Heart right ventricle (tissue), 16 donors: ENCODE measurements at regions of chr3 and their contacts with region 1.

Region 1: GRCh38 chr3:171459942-171460724 is at the start of gene TNIK:
- DNase-seq: peak; percentile 92 to 93
- ATAC-seq: peak; percentile 95 to 98 (median 96)
- H3K4me3 ChIP-seq: peak within 1 kb of the TSS; percentile 40 to 89 (median 72)
- H3K27ac ChIP-seq: peak within 1 kb of the TSS; percentile 54 to 87 (median 82)
- H3K4me1 ChIP-seq: peaks cover 0 to 52% (median 25%) of the 10 kb centered on the region in 9 donors
- H3K27me3 ChIP-seq: peaks cover 0 to 30% (median 9%) of the 10 kb centered on the region in 7 donors
- CTCF ChIP-seq: peak in 1 of 9 donors; percentile 36
- total RNA-seq, gene TNIK: 20.5 to 51.9 (median 38.8) TPM

Region 2: DNA sequence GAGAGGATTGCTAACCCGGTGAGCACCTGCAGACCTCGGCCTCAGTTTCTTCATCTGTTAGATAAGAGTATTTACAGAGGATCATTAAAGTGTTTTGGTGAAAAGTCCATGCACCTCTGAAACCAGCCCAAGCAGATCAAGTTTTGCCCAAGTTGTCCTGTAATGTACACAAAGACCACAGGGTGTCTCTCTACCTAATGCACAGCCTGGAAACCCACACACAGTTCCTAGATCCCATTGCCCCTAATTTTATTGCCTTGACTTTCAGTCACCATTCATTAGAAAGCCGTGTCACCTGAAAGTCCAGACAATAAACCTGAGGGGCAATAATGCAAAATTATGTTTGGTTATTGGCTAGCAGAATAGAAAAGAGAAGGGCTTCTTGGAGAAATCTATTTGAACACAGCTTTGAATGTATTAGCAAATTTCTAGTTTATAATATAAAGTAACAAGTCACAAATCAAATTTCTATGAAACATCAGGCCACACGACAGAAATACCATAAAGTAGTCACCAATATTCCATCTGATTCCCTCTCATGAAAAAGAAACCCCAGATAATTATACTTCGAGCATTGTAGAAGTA is 272.3 kb before region 1 on chr3:
- intact Hi-C with region 1: loop called in 6 of 10 experiments (anchors 5 kb)
- DNase-seq: peak in 1 of 2 donors; percentile 15
- ATAC-seq: peak in 7 of 8 donors; percentile 54 to 76 (median 68)
- H3K4me3 ChIP-seq: no peak overlapping the region
- H3K27ac ChIP-seq: peak overlapping the region in 1 of 10 donors; percentile 9
- H3K4me1 ChIP-seq: peaks cover 2 to 42% (median 26%) of the 10 kb centered on the region in 9 donors
- H3K27me3 ChIP-seq: no peaks in the 10 kb centered on the region
- CTCF ChIP-seq: peak; percentile 31 to 70 (median 63)

Region 3: GRCh38 chr3:171320750-171321558 is 139.2 kb before region 1 on chr3:
- intact Hi-C with region 1: loop called in 8 of 10 experiments (anchors 5 to 10 kb)
- DNase-seq: peak in 1 of 2 donors; percentile 58
- ATAC-seq: peak; percentile 85 to 97 (median 94)
- H3K4me3 ChIP-seq: peak overlapping the region in 2 of 10 donors; percentile 3
- H3K27ac ChIP-seq: peak overlapping the region in 6 of 10 donors; percentile 38 to 69 (median 58)
- H3K4me1 ChIP-seq: peaks cover 0 to 60% (median 37%) of the 10 kb centered on the region in 9 donors
- H3K27me3 ChIP-seq: no peaks in the 10 kb centered on the region
- CTCF ChIP-seq: no peak

Region 4: DNA sequence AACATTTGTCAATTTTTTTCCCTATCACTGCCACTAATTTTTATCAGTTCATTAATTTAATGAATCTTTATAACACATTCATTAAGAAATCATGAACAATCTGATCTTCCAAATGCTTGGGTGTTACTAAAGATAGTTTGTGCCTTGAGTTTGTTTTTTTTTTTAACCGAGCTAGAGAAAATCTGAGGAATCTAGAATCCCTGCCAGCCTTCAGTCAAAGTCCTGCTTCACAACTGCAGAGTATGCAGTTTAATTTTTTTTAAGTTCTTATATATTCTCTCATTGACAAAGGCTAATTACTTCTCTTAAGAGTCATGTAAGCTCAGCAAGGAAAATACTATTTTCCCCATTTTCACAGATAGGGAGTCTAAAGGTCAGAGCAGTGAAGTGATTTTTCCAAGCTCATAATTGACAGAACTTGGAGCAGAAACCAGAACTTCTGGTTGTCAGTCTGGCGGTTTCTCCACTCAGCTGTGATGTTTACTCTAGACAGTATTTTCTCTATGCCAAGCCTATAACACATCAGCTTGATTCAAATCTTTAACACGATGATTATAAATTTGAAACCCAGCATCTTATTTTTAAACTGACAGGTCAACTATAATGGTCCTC is 55.7 kb before region 1 on chr3:
- intact Hi-C with region 1: loop called in 1 of 10 experiments (anchors 5 kb)
- DNase-seq: no peak
- ATAC-seq: no peak
- H3K4me3 ChIP-seq: no peak overlapping the region
- H3K27ac ChIP-seq: no peak overlapping the region
- H3K4me1 ChIP-seq: peaks cover 0 to 68% (median 27%) of the 10 kb centered on the region in 9 donors
- H3K27me3 ChIP-seq: no peaks in the 10 kb centered on the region
- CTCF ChIP-seq: no peak

Region 5: GRCh38 chr3:171556148-171557145 is 96.3 kb after region 1 on chr3:
- intact Hi-C with region 1: loop called in 4 of 10 experiments (anchors 5 to 10 kb)
- DNase-seq: peak; percentile 29 to 32
- ATAC-seq: peak; percentile 55 to 94 (median 87)
- H3K4me3 ChIP-seq: no peak overlapping the region
- H3K27ac ChIP-seq: no peak overlapping the region
- H3K4me1 ChIP-seq: peaks cover 0 to 27% (median 4%) of the 10 kb centered on the region in 9 donors
- H3K27me3 ChIP-seq: no peaks in the 10 kb centered on the region
- CTCF ChIP-seq: no peak